Dendritic cell treated with granulocyte-macrophage colony-stimulating factor and Interleukin-4, amounts not matched to agents 40 ng/mL and 50 ng/mL, for 4 days (primary cell): ENCODE measurements at regions of chr17 and their contacts with region 1.

Region 1: GRCh38 chr17:7589204-7589868 is 558 bp downstream of the SOX15 start:
- H3K4me3 Mint-ChIP-seq: peak overlapping the region; percentile 35
- H3K27ac Mint-ChIP-seq: no peak overlapping the region
- H3K4me1 Mint-ChIP-seq: peaks cover 51% of the 10 kb centered on the region
- H3K27me3 Mint-ChIP-seq: no peaks in the 10 kb centered on the region

Region 2: DNA sequence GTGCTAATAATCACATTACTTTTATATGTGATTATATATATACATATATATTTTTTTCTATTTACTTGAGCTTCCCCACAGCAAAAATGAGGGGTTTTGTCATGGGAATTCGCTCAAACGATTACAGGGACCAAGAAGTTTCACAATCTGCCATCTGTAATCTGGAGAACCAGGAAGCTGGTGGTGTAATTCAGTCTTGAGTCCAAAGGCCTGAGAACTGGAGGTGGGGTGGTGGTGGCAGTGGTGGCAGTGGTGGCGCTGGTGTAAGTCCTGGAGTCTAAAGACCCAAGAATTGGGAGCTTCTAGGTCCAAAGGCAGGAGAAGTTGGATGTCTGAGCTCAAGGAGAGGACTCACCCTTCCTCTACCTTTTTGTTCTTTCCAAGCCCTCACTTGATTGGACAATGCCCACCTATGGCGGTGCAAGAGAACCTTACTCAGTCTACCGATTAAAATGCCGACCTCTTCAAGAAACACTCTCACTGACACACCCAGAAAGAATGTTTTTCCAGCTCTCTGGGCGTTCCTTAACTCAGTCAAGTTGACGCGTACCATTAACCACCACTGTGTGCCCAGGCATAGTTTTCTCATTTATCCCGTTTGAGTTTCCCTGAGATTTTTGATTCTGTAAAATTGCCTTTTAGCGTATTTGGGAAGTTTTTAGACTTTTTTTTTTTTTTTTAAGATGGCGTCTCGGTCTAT is 73.3 kb before region 1 on chr17:
- intact Hi-C with region 1: loop called (anchors 2 kb)
- H3K4me3 Mint-ChIP-seq: no peak overlapping the region
- H3K27ac Mint-ChIP-seq: peak overlapping the region; percentile 46
- H3K4me1 Mint-ChIP-seq: peaks cover 40% of the 10 kb centered on the region
- H3K27me3 Mint-ChIP-seq: no peaks in the 10 kb centered on the region

Region 3: GRCh38 chr17:7572588-7573323 is 16.6 kb before region 1 on chr17:
- intact Hi-C with region 1: no loop called
- H3K4me3 Mint-ChIP-seq: peak overlapping the region; percentile 85
- H3K27ac Mint-ChIP-seq: peak overlapping the region; percentile 95
- H3K4me1 Mint-ChIP-seq: peaks cover 80% of the 10 kb centered on the region
- H3K27me3 Mint-ChIP-seq: no peaks in the 10 kb centered on the region

Region 4: DNA sequence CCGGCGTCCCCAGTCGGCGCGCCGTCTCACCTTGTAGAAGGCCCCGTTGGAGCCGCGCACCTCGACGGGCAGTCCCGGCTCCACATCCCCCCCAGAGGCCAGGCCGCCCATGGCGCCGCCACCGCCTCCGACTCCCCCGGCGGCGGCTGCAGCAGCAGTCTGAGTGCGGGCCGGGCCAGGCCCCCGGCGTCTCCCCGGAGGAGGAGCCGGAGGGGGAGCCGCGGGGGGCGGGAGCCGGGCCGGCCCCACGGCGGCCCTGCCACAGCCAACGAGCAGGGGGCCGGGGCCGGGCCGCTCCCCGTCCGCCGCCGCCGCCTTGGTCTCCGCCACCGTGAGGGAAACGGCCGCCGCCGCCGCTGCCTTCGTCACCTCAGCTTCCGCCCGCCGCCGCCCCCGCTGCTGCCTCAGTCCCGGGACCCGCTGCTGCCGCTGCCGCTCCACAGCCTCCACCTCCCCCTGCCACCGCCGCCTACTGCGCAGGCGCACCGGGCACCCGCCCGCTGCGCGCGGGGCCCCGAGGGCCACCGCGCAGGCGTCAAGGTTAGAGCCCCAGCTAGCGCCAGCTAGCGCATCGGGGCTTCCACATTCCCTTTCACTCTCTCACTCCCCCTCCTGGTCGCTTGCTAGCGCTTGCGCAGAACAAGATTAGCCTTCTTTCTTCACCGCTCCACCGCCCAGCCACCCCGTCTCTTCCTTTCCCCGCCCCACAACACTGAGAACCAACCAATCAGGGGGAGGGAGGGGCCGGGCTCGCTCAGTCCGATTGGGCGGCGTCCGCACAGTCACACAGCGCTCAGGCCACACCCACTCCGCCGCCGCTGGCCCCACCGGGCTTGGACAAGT is 25.3 kb after region 1 on chr17 and contains the start of gene FXR2:
- intact Hi-C with region 1: no loop called
- H3K4me3 Mint-ChIP-seq: peak within 1 kb of the TSS; percentile 92
- H3K27ac Mint-ChIP-seq: peak within 1 kb of the TSS; percentile 80
- H3K4me1 Mint-ChIP-seq: peaks cover 47% of the 10 kb centered on the region
- H3K27me3 Mint-ChIP-seq: no peaks in the 10 kb centered on the region

Region 5: DNA sequence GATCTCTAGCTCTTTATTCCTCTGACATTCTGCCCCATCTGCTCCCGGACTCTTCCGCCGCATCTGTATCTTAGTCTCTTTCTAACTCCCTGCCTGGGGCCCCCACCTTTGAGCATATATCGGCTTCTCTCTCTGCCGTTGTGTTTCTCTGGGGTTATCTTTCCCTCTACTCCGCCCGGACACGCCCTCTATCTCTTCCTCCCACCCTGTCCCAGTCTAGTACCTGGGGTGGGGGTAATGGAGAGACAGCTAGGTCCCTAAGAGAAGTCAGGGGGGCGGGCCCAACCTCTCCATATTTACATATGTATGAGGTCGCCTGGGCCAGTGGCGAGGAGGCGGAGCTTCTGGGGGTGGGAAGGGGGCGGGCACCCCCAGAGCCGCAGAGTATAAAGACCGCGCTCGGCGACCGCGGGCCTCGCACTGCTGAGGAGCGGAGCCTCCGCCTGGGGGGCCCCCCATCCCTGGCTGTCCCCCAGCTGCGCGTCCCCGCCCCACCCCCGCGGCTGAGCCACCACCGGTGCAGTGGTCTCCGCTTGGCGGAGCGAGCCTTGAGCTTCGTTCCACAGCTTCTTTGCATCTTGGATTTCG is 61.3 kb after region 1 on chr17 and contains the start of gene ATP1B2:
- intact Hi-C with region 1: no loop called
- H3K4me3 Mint-ChIP-seq: peak within 1 kb of the TSS; percentile 80
- H3K27ac Mint-ChIP-seq: no peak within 1 kb of the TSS
- H3K4me1 Mint-ChIP-seq: peaks cover 44% of the 10 kb centered on the region
- H3K27me3 Mint-ChIP-seq: peaks cover 66% of the 10 kb centered on the region